ENCODE measurements at regions of chr4 and their contacts with region 1.

Region 1: GRCh38 chr4:183471946-183472708 is 27.7 kb downstream of the CDKN2AIP start:
- DNase-seq: peak; percentile 90
- H3K4me3 ChIP-seq: no peak overlapping the region
- H3K27ac ChIP-seq: no peak overlapping the region
- H3K4me1 ChIP-seq: peaks cover 0 to 15% (median 13%) of the 10 kb centered on the region in 4 donors
- H3K27me3 ChIP-seq: no peaks in the 10 kb centered on the region
- CTCF ChIP-seq: peak in 5 of 7 experiments; percentile 66 to 93 (median 88)
- EP300 ChIP-seq: no peak
- POLR2A ChIP-seq: no peak

Region 2: GRCh38 chr4:183532821-183533220 is 60.7 kb after region 1 on chr4:
- intact Hi-C with region 1: no loop called
- DNase-seq: no peak
- H3K4me3 ChIP-seq: no peak overlapping the region
- H3K27ac ChIP-seq: no peak overlapping the region
- H3K4me1 ChIP-seq: no peaks in the 10 kb centered on the region
- H3K27me3 ChIP-seq: peaks cover 0 to 19% (median 0%) of the 10 kb centered on the region in 3 donors
- CTCF ChIP-seq: no peak
- EP300 ChIP-seq: no peak
- POLR2A ChIP-seq: no peak

Region 3: DNA sequence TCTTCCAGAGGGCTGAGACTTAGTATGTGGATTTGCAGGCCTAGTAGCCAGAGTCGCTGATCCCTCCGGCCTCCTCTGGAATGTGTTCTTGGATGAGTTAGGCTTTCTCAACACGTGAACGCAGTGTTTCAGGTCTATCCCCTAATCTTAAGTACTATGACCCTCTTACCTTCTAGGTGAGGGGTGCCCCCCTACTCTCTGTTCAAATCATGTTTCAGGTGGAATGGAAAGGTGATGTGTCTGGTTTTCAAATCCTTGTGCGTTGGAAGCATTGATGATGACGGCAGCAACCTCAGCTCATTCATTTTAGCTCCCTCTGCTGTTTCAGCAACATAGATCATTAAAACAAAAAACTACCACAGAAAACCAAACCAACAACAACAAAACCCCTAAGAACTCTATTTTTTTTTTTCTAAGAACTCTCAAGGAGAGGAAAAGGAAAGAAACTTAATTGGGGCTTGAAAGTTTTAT is 130.5 kb after region 1 on chr4:
- intact Hi-C with region 1: loop called (anchors 10 kb)
- DNase-seq: peak in 1 of 2 donors; percentile 57
- H3K4me3 ChIP-seq: no peak overlapping the region
- H3K27ac ChIP-seq: peak overlapping the region in 1 of 5 donors; percentile 34
- H3K4me1 ChIP-seq: no peaks in the 10 kb centered on the region
- H3K27me3 ChIP-seq: no peaks in the 10 kb centered on the region
- CTCF ChIP-seq: peak in 3 of 7 experiments; percentile 28 to 34 (median 31)
- EP300 ChIP-seq: no peak
- POLR2A ChIP-seq: no peak

Region 4: DNA sequence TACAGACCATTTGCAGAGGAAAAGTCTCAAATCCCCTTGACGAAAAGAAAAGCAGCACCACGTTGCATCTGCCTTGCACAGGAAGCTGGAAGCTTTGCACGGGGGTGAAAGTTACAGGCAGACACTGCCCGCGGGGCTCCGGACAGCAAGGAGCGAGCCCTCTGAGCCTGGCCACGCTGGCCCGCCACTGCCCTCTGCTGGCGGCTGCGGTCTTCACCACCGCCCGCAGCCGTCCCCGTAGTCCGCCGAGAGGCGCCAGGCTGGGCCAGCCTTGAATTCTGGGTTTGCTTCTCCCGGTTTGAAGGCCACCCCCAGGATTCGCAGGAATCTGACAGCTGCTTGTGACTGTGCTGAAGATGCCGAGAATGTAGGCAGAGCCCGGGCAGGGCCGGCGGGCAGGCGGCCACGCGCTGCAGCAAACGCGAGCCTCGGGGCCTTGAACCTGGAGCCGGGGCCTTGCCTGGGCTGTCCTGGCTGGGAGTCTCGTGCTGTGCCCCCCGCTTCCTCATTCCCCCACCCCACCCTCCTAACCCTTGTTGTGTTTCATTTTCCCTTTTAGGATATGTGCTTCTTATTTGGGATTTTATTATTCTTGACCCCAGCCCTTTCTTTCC is 696.4 kb after region 1 on chr4:
- intact Hi-C with region 1: no loop called
- DNase-seq: peak; percentile 81 to 92
- H3K4me3 ChIP-seq: peak overlapping the region in 2 of 4 donors; percentile 1 to 32
- H3K27ac ChIP-seq: no peak overlapping the region
- H3K4me1 ChIP-seq: peaks cover 0 to 10% (median 9%) of the 10 kb centered on the region in 4 donors
- H3K27me3 ChIP-seq: peaks cover 0 to 20% (median 0%) of the 10 kb centered on the region in 3 donors
- CTCF ChIP-seq: peak in 5 of 7 experiments; percentile 82 to 95 (median 88)
- EP300 ChIP-seq: no peak
- POLR2A ChIP-seq: no peak